ENCODE measurements at regions of chr1 and their contacts with region 1.

Region 1: DNA sequence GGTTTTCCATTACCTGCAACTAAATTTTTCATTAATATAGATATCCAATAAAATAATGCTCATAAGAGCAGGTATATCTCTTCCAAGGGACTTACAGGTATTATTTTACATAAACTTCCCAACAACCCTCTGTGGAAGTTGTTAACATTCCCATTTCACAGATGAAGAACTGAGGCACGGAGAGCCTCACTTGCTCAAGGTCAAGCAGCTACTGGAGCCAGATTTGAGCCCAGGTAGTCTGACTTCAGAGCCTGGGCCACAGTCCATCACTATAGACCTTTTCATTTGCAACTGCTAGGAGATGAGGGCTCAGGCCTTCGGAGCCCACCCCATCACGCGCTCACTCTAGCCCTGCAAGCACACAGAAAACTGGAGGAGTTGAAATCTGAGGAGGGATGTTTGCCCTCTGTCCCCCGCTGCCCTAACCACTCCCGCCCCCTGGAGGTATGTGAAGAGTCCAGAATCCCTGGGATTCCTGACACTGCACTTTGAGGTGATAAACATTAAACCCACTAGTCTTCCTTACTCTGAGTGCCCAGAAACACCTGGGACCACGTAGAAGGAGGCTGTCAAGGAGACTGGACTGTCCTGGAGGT is 11.7 kb upstream of the ALPL start:
- DNase-seq: no peak
- H3K4me3 ChIP-seq: no peak overlapping the region
- H3K27ac ChIP-seq: no peak overlapping the region
- H3K4me1 ChIP-seq: no peaks in the 10 kb centered on the region
- H3K27me3 ChIP-seq: no peaks in the 10 kb centered on the region
- CTCF ChIP-seq: no peak

Region 2: DNA sequence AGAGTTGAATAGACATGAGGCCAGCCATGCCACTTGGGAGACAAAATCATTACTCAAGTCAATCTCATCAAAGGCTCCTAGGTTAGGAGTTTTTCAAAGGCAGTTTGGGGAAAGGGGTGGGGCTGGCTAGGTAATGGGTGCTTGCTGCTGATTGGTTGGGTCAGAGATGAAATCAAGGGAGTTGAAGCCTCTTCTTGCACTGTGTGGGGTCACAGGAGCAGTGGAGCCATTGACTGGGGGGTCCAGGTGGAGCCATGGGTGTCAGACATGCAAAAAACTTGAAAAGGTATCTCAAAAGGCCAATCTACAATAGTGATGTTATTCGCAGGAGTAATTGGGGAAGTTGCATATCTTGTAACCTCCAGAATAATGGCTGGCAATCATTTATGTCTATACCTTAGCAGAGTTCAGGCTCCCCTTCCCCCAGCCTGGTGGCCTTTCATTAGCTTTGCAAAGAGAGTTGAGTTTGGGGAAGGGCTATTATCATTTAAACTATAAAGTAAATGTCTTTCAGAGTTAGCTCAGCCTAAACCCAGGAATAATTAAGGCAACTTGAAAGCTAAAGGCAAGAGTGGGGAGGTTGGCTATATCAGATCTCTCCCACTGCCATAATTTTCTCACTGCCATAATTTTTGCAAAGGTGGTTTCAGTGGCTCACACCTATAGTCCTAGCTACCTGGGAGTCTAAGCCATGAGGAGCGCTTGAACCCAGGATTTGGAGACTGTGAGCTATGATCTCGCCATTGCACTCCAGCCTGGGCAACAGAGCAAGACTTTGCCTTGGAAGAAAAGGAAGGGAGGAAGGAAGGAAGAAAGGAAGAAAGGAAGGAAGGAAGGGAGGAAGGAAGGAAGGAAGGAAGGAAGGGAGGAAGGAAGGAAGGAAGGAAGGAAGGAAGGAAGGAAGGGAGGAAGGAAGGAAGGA is 872.1 kb before region 1 on chr1:
- CTCF ChIA-PET with region 1: no interaction called
- POLR2A ChIA-PET with region 1: interaction called, 16 read pairs
- intact Hi-C with region 1: no loop called
- DNase-seq: no peak
- H3K4me3 ChIP-seq: no peak overlapping the region
- H3K27ac ChIP-seq: no peak overlapping the region
- H3K4me1 ChIP-seq: no peaks in the 10 kb centered on the region
- H3K27me3 ChIP-seq: no peaks in the 10 kb centered on the region
- CTCF ChIP-seq: no peak

Region 3: DNA sequence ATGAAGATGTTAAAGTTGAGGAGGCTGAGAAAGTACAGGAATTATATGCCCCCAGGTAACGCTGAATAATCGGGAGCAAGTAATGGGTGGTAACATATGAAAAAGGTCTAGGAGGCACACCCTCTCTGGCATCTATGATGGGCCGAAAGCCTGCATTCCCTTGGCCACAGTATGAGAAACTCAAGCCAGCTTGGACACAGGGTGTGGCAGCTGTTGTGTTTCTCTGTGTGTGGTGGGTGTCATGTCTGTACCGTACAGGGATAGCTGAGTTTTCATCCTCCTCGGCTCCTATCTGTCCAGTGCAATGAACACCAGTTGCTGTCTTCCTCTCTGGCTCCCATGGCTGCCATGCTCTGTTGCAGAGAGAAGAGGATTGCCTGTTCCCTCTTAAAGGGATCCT is 24.7 kb before region 1 on chr1:
- CTCF ChIA-PET with region 1: no interaction called
- POLR2A ChIA-PET with region 1: no interaction called
- intact Hi-C with region 1: no loop called
- DNase-seq: no peak
- H3K4me3 ChIP-seq: no peak overlapping the region
- H3K27ac ChIP-seq: no peak overlapping the region
- H3K4me1 ChIP-seq: peaks cover 12% of the 10 kb centered on the region
- H3K27me3 ChIP-seq: no peaks in the 10 kb centered on the region
- CTCF ChIP-seq: no peak

Region 4: GRCh38 chr1:21508580-21509350 is 11.2 kb after region 1 on chr1:
- CTCF ChIA-PET with region 1: no interaction called
- POLR2A ChIA-PET with region 1: no interaction called
- intact Hi-C with region 1: no loop called
- DNase-seq: peak in 1 of 2 experiments; percentile 53
- H3K4me3 ChIP-seq: no peak overlapping the region
- H3K27ac ChIP-seq: no peak overlapping the region
- H3K4me1 ChIP-seq: no peaks in the 10 kb centered on the region
- H3K27me3 ChIP-seq: no peaks in the 10 kb centered on the region
- CTCF ChIP-seq: peak; percentile 35; the same call in 1 of the 2 replicates

Region 5: DNA sequence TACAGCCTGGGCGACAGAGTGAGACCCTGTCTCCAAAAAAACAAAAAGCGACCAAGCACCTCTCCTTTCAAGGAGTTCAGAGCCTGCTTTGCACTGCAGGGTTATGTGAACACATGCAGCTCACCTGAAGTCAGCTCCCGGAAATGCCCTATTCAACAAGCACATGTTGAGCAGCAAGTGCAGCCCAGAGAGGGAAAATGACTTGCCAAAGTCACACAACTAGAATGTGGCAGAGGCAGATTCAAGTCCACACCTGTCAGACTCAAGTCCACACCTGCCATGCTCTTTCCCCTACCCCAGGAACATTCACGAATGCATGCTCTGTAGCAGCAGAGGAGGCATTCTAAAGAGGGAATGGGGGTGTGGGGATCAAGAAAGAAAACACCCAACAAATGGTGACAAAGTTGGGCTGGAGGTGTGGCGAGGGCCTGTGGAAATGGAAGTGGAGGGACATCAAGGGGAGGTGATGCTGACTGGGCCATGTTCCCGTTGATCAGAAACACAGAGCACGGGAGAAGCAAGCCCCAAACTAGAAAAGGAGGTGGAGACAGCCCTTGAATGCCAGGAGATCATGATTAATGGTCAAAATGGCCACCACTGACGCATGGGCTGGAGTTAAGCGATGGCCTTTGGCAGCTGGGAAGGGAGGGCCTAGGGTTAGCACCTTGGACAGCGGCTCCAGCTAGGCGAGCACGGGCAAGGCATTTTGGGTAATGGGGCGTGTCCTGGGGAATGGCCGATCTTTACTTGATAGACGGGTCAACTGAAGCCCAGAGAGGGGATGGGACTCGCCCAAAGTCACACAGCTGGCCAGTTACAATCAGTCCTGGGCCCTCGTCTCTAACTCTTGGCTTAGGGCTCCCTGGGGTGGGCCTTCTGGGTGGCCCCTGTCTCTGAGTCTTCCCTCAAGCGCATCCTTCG is 150.1 kb after region 1 on chr1:
- CTCF ChIA-PET with region 1: no interaction called
- POLR2A ChIA-PET with region 1: no interaction called
- intact Hi-C with region 1: no loop called
- DNase-seq: peak in 1 of 2 experiments; percentile 38
- H3K4me3 ChIP-seq: no peak overlapping the region
- H3K27ac ChIP-seq: no peak overlapping the region
- H3K4me1 ChIP-seq: peaks cover 10% of the 10 kb centered on the region; the same call in 1 of the 2 replicates
- H3K27me3 ChIP-seq: no peaks in the 10 kb centered on the region
- CTCF ChIP-seq: no peak

Region 6: DNA sequence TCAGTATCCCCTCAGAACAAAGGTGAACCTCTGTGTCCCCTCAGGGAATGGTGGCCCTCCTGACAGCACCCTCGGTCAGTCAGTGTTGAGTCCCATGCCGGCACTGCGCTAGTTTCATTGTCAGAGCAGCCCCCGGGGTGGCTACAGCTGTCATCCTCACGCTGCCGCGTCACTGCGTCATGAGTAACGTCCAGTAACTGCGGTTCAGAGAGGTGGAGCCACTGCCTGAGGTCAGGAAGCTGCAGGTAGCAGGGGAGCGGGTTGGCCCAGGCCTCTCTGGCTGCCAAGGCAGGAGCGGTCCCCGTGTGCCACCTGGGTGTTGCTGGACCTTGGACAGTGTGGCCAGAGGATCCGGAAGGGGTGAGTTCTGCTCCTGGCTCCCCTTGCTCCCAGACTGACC is 665.6 kb after region 1 on chr1:
- CTCF ChIA-PET with region 1: no interaction called
- POLR2A ChIA-PET with region 1: no interaction called
- intact Hi-C with region 1: no loop called
- DNase-seq: peak; percentile 57 to 67
- H3K4me3 ChIP-seq: peak overlapping the region; percentile 26; the same call in 1 of the 2 replicates
- H3K27ac ChIP-seq: no peak overlapping the region
- H3K4me1 ChIP-seq: no peaks in the 10 kb centered on the region
- H3K27me3 ChIP-seq: no peaks in the 10 kb centered on the region
- CTCF ChIP-seq: no peak

Measured in PC-9 (cell line).